AG04450 (cell line): ENCODE measurements at regions of chr6 and their contacts with region 1.

Region 1: GRCh38 chr6:127302728-127303660 is 36.3 kb downstream of the RNF146 start:
- DNase-seq: no peak
- H3K4me3 ChIP-seq: no peak overlapping the region
- H3K27ac ChIP-seq: no peak overlapping the region
- H3K27me3 ChIP-seq: no peaks in the 10 kb centered on the region
- CTCF ChIP-seq: peak; percentile 74

Region 2: GRCh38 chr6:127162836-127163235 is 140.2 kb before region 1 on chr6:
- CTCF ChIA-PET with region 1: no interaction called
- POLR2A ChIA-PET with region 1: no interaction called
- DNase-seq: no peak
- H3K4me3 ChIP-seq: no peak overlapping the region
- H3K27ac ChIP-seq: no peak overlapping the region
- H3K27me3 ChIP-seq: no peaks in the 10 kb centered on the region
- CTCF ChIP-seq: no peak

Region 3: GRCh38 chr6:127266178-127266891 is 36.7 kb before region 1 on chr6 and contains the start of gene RNF146:
- CTCF ChIA-PET with region 1: interaction called, 10 read pairs
- POLR2A ChIA-PET with region 1: no interaction called
- DNase-seq: peak; percentile 34
- H3K4me3 ChIP-seq: peak within 1 kb of the TSS; percentile 87
- H3K27ac ChIP-seq: peak within 1 kb of the TSS; percentile 95
- H3K27me3 ChIP-seq: no peaks in the 10 kb centered on the region
- CTCF ChIP-seq: peak; percentile 75
- polyA plus RNA-seq, gene RNF146: 50.5 and 64.1 TPM in 2 replicates

Region 4: GRCh38 chr6:127317388-127318128 is 14.6 kb after region 1 on chr6:
- CTCF ChIA-PET with region 1: interaction called, 25 read pairs
- POLR2A ChIA-PET with region 1: no interaction called
- DNase-seq: no peak
- H3K4me3 ChIP-seq: no peak overlapping the region
- H3K27ac ChIP-seq: no peak overlapping the region
- H3K27me3 ChIP-seq: no peaks in the 10 kb centered on the region
- CTCF ChIP-seq: no peak

Region 5: GRCh38 chr6:127420556-127420955 is 117.6 kb after region 1 on chr6:
- CTCF ChIA-PET with region 1: interaction called, 49 read pairs
- POLR2A ChIA-PET with region 1: no interaction called
- DNase-seq: peak; percentile 76
- H3K4me3 ChIP-seq: no peak overlapping the region
- H3K27ac ChIP-seq: no peak overlapping the region
- H3K27me3 ChIP-seq: no peaks in the 10 kb centered on the region
- CTCF ChIP-seq: peak; percentile 46

Region 6: DNA sequence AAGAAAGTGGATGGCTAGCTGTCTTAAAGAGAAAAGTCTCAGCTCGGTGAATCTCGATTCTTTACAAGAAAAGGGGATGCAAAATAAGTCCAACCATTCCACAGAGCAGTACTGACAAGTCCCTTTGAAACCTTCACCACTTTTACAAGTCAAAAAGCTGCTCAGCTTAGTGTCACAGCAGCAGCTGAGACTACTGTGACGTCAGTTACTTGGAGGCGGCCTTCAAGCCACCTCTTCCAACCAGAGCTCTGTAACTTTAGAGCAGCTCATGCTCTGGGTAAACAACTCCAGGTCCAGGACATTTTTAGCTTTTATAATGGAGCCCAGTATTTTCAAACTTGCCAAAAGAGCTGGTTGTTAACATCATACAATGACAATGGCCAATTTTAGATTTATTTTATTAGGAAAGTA is 156.2 kb after region 1 on chr6 and contains the start of gene KIAA0408:
- CTCF ChIA-PET with region 1: interaction called, 10 read pairs
- POLR2A ChIA-PET with region 1: no interaction called
- DNase-seq: no peak
- H3K4me3 ChIP-seq: peak within 1 kb of the TSS; percentile 43
- H3K27ac ChIP-seq: peak within 1 kb of the TSS; percentile 58
- H3K27me3 ChIP-seq: no peaks in the 10 kb centered on the region
- CTCF ChIP-seq: no peak
- polyA plus RNA-seq, gene KIAA0408: 4.7 and 6.3 TPM in 2 replicates

Region 7: DNA sequence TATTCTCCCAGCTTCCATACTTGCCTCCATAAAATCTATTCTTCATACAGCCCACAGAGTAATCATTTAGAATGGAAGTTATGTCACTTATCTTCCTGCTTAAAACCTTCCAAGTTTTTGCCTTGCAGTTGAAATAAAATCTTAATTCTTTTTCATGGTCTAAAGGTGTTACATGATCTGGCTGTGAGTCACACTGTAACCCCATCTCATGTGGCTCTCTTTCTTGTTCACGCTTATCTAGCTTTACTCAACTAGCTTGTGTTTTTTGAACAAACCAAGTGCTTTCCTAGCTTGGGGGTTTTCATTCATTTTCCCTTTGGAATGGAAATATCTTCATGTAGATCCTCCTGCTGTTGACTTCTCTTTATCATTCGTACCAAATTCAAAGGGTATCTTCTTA is 621.4 kb after region 1 on chr6:
- CTCF ChIA-PET with region 1: no interaction called
- POLR2A ChIA-PET with region 1: no interaction called
- DNase-seq: no peak
- H3K4me3 ChIP-seq: no peak overlapping the region
- H3K27ac ChIP-seq: no peak overlapping the region
- H3K27me3 ChIP-seq: peaks cover 6% of the 10 kb centered on the region
- CTCF ChIP-seq: no peak